Activated CD8-positive, alpha-beta T cell treated with anti-CD3 and anti-CD28 coated beads, Interleukin-2, amount 10 ng/mL, durations not matched to agents 7 days and 5 days (primary cell): ENCODE measurements at regions of chr3 and their contacts with region 1.

Region 1: GRCh38 chr3:108662130-108662738 is 72.7 kb downstream of the DZIP3 start:
- DNase-seq: peak; percentile 67
- ATAC-seq: peak; percentile 72
- H3K4me3 Mint-ChIP-seq: no peak overlapping the region
- H3K27ac Mint-ChIP-seq: no peak overlapping the region
- H3K4me1 Mint-ChIP-seq: peaks cover 19% of the 10 kb centered on the region
- H3K27me3 Mint-ChIP-seq: no peaks in the 10 kb centered on the region

Region 2: GRCh38 chr3:108292905-108293328 is 369.3 kb before region 1 on chr3:
- CTCF ChIA-PET with region 1: no interaction called
- POLR2A ChIA-PET with region 1: no interaction called
- DNase-seq: no peak
- ATAC-seq: peak; percentile 87
- H3K4me3 Mint-ChIP-seq: peak overlapping the region; percentile 61
- H3K27ac Mint-ChIP-seq: peak overlapping the region; percentile 83
- H3K4me1 Mint-ChIP-seq: peaks cover 70% of the 10 kb centered on the region
- H3K27me3 Mint-ChIP-seq: no peaks in the 10 kb centered on the region

Region 3: DNA sequence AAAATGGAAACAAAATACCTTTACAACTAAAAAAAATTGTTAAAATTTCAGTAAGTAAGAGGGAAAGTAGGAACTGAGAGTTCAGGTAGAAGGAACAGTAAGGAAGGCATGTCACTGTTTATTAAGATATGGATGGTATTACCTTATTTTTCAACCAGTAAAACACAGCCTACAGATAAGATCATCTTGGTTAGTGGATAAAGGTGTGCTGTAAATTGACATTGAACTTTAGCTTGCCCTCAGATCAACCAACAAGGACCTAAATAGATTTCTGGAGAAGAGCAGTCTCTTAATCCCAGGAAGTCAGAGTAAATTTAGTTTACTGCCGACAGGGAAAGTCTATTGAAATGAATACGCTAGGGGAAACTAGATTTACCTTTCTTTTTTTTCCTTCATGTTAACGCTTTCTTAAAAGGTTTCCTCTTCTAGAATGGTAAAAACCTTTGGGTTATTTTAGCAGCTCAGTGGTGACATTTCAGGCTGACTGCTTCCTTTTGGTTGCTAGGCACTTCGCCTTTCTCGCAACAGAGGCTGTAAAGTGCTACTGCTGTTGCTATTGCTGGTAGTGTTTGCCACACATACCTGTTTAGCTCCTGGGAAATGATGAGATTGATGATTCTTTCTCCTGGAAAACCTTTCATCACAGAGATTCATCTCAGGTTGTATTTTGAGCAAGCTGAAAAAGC is 59.8 kb before region 1 on chr3:
- CTCF ChIA-PET with region 1: interaction called, 10 read pairs
- POLR2A ChIA-PET with region 1: no interaction called
- DNase-seq: peak; percentile 66
- ATAC-seq: peak; percentile 78
- H3K4me3 Mint-ChIP-seq: peak overlapping the region; percentile 65
- H3K27ac Mint-ChIP-seq: peak overlapping the region; percentile 86
- H3K4me1 Mint-ChIP-seq: peaks cover 54% of the 10 kb centered on the region
- H3K27me3 Mint-ChIP-seq: no peaks in the 10 kb centered on the region

Region 4: DNA sequence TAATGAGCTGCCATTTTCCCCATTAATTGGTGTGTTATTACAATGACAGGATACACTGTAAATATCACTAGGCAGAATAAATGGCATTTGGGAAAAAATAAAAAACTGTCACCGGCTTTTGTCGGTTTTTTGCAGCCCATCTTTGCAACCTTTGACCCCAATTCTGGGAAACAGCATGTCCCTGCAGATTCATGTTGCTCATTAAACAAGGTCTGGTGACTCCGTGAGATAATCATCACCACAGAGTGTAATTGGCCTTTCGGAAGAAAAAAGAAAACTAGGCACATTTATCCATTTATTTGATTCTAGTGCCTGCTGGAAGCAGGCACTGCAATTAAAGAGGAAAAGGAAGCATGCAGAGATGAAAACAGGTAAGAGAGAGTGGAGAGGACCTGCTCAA is 224.9 kb after region 1 on chr3:
- CTCF ChIA-PET with region 1: no interaction called
- POLR2A ChIA-PET with region 1: no interaction called
- DNase-seq: no peak
- ATAC-seq: no peak
- H3K4me3 Mint-ChIP-seq: no peak overlapping the region
- H3K27ac Mint-ChIP-seq: no peak overlapping the region
- H3K4me1 Mint-ChIP-seq: peaks cover 9% of the 10 kb centered on the region
- H3K27me3 Mint-ChIP-seq: no peaks in the 10 kb centered on the region